ENCODE measurements at regions of chr4 and their contacts with region 1.

Region 1: DNA sequence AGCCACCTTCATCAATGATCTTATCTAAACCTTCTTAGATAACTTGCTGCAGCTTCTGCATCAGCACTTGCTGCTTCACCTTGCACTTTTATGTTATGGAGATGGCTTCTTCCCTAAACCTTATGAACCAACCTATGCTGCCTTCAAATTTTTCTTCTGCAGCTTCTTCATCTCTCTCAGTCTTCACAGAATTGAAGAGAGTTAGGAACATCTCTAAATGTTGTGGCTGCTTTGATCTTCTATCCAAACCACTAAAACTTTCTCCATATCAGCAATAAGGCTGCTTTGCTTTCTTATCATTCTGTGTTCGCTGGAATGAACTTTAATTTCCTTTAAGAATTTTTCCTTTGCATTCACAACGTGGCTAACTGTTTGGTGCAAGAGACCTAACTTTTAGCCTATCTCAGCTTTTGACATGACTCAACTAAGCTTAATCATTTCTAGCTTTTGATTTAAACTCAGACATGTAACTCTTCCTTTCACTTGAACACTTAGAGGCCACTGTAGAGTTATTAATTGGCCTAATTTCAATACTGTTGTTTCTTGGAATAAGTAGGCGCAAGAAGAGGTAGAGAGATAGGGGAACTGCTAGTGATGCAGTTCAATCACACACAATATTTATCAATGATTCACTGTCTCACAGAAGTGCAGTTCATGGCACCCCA is 36.1 kb upstream of the CORIN start:
- DNase-seq: no peak
- H3K4me3 Mint-ChIP-seq: no peak overlapping the region
- H3K27ac Mint-ChIP-seq: no peak overlapping the region
- H3K4me1 Mint-ChIP-seq: peaks cover 8% of the 10 kb centered on the region
- H3K27me3 Mint-ChIP-seq: no peaks in the 10 kb centered on the region

Region 2: DNA sequence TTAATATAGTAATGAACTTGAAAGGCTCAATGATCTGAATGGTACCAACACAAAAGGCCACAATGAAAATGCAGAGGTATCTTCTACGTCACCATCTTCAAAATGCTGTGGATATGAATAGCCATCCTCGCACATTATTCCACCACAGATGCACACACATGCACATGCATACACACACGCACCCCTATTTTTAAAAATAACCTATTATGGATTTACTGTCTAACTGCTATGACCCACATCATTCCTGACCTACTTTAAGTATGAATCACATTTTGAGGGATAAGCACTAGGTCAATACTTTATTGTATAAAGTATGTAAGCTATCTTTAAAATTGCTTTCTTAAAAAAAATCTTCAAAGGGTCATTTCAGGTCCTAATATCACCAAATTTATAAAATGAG is 11.7 kb before region 1 on chr4:
- intact Hi-C with region 1: loop called (anchors 1 kb)
- DNase-seq: no peak
- H3K4me3 Mint-ChIP-seq: no peak overlapping the region
- H3K27ac Mint-ChIP-seq: no peak overlapping the region
- H3K4me1 Mint-ChIP-seq: no peaks in the 10 kb centered on the region
- H3K27me3 Mint-ChIP-seq: no peaks in the 10 kb centered on the region

Region 3: GRCh38 chr4:47891928-47892327 is 17.9 kb after region 1 on chr4:
- intact Hi-C with region 1: loop called (anchors 2 kb)
- DNase-seq: no peak
- H3K4me3 Mint-ChIP-seq: no peak overlapping the region
- H3K27ac Mint-ChIP-seq: peak overlapping the region; percentile 42
- H3K4me1 Mint-ChIP-seq: peaks cover 6% of the 10 kb centered on the region
- H3K27me3 Mint-ChIP-seq: no peaks in the 10 kb centered on the region